ENCODE measurements at regions of chr7 and their contacts with region 1.

Region 1: DNA sequence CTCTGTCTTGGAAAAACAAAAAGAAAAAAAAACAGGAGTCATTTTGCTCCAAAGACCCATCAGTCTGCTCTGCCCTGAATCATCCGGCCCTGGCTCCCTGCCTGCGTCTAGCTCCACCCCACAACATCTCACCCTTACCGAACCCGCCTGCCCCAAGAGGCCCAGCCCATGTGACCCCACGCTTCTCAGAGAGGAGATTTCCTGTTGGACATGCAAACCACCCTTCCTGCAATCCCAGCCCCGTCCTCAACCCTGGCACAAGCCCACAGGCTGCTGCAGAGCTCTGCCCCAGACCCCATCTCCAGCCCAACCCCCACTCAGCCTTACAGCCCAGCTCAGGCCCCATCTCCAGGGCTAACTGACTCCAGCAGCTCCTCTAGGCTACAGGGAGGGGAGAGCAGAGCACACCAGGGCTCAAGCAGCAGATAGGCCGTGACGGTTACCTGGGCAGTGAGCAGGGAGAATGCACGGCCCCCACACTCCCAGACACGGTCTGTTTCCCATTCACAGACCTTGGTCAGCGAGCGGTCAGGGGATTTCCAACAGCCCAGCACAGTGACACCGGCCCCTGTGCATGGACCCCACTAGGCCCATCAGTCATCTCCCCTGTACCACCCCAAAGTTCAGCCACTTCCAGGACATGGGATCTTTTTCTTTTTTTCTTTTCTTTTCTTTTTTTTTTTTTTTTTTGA is 69.9 kb upstream of the GTF2I start:
- DNase-seq: peak; percentile 88
- H3K4me3 ChIP-seq: no peak overlapping the region
- H3K27ac ChIP-seq: peak overlapping the region; percentile 58
- H3K4me1 ChIP-seq: peaks cover 7% of the 10 kb centered on the region
- H3K27me3 ChIP-seq: no peaks in the 10 kb centered on the region
- CTCF ChIP-seq: no peak
- POLR2A ChIP-seq: no peak

Region 2: DNA sequence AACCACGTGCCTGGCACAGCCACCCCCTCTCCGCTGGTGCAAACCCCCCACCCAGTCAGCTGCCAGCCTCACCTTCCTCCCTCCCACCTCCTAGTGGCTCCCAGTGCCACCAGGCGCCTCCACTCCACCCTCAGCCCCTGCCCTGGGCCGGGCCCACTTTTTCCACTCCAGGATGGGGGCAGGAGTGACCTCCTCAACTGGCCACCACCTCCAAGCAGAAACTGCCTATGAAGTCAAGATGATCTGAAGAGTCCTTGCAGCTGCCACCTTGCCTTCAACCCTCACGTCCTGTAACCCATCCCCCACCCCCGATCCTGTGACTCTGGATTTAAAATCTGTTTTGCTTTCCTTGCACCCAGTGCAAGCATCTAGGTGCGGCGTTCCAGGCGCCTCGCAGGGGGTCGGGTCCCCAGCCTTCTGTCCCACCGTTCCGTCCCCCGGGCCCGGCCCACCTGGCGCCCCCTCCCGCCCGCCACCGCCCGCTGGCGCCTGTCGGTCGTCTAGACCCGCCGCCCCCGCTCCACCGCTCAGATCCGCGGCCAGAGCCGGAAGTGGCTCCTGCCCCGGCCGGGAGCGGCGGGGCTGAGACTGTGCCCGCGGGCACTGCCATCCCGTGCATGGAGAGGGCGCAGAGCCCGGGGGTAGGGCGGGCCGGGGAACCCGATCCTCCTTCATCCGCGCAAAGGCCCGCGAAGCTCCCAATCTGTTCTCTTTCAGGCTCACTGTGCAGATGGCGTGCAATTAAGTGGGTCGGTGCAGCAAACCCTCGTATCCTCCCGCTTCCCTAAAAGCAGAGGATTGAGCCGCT is 18.7 kb after region 1 on chr7:
- CTCF ChIA-PET with region 1: interaction called, 4 read pairs
- POLR2A ChIA-PET with region 1: no interaction called
- dilution Hi-C with region 1: no loop called
- intact Hi-C with region 1: loop called (anchors 2 kb)
- DNase-seq: peak; percentile 24
- H3K4me3 ChIP-seq: peak overlapping the region; percentile 27 to 45 (median 34)
- H3K27ac ChIP-seq: no peak overlapping the region
- H3K4me1 ChIP-seq: peaks cover 10% of the 10 kb centered on the region
- H3K27me3 ChIP-seq: no peaks in the 10 kb centered on the region
- CTCF ChIP-seq: no peak
- POLR2A ChIP-seq: no peak

Region 3: GRCh38 chr7:75033050-75033449 is 445.5 kb after region 1 on chr7:
- CTCF ChIA-PET with region 1: no interaction called
- POLR2A ChIA-PET with region 1: no interaction called
- dilution Hi-C with region 1: no loop called
- intact Hi-C with region 1: no loop called
- DNase-seq: no peak
- H3K4me3 ChIP-seq: no peak overlapping the region
- H3K27ac ChIP-seq: no peak overlapping the region
- H3K4me1 ChIP-seq: no peaks in the 10 kb centered on the region
- H3K27me3 ChIP-seq: no peaks in the 10 kb centered on the region
- CTCF ChIP-seq: peak in 1 of 2 donors; percentile 23
- POLR2A ChIP-seq: no peak

Measured in endothelial cell of umbilical vein (primary cell).